GM10248 (cell line): ENCODE measurements at regions of chr5 and their contacts with region 1.

Region 1: GRCh38 chr5:141968914-141969608 is at the start of gene RNF14:
- DNase-seq: peak; percentile 95
- CTCF ChIP-seq: peak; percentile 87

Region 2: DNA sequence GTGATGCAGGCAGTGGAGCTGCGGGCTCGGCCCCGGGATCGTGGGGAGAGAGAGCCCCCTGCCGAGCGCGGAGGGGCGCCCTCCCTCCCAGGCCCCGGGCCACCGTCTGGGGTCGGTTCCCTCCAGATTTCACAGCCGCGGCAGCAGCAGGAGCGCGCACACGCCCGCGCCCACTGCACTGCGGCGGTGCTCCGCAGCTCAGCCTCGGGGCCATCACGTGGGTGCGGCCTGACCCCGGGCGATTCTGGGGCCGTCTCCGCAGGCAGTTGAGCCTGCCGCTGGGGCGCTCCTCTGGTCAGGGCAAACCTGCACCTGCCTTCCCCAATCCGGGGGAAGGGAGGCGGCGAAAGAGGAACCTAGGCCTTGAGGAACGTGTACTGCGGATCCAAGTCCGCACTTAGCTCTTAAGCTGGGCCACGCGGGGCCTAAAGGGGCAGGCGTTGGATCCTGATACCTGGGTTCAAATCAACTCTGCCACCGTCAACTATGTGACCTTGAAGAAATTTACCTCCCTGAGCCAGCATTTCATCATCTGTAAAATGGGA is 54.8 kb before region 1 on chr5:
- CTCF ChIA-PET with region 1: interaction called, 10 read pairs
- POLR2A ChIA-PET with region 1: no interaction called
- DNase-seq: peak; percentile 66
- CTCF ChIP-seq: peak; percentile 29

Region 3: GRCh38 chr5:141940695-141941271 is 28.3 kb before region 1 on chr5:
- CTCF ChIA-PET with region 1: interaction called, 10 read pairs
- POLR2A ChIA-PET with region 1: no interaction called
- DNase-seq: no peak
- CTCF ChIP-seq: no peak

Region 4: GRCh38 chr5:141992349-141992963 is 23.4 kb after region 1 on chr5:
- CTCF ChIA-PET with region 1: interaction called, 26 read pairs
- POLR2A ChIA-PET with region 1: no interaction called
- DNase-seq: peak; percentile 54
- CTCF ChIP-seq: peak; percentile 70

Region 5: DNA sequence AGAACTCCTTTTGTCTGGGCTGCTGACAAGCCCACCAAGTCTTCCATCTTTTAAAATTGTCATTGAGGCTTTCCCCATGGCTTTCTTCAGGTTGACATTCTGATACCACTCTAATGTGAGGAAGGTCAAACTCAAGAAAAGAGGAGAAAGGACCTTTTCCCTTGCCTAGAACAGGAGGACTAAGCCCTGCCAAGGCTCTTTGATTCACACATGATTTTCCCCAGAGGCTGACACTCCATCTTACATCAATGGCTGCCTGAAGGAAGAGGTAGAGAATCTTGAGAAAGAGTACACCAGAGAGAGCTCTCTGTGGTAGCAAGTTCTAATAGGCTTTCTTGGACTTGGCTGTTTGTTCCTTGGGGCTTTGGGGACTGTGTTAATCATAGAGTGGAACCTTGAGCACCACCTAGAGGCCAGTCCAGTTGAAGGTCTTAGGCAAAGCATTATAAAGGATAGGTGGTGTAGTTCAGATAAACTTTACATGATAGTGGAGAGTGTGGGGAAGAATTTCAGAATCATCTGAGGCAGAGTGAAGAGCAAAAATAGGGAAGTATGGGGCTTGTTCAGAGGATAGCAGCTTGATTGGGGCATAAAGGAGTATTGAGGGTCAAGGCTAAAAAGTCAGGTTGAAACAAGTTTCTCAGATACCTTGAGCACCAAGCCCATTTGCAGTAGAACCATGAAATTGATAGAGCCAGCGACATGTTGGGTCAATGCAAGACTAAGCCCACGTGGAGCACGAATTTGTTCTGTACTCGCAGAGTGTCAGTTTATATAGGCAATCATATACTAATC is 176.2 kb after region 1 on chr5:
- CTCF ChIA-PET with region 1: interaction called, 11 read pairs
- POLR2A ChIA-PET with region 1: no interaction called
- DNase-seq: peak; percentile 50
- CTCF ChIP-seq: peak; percentile 79

Region 6: DNA sequence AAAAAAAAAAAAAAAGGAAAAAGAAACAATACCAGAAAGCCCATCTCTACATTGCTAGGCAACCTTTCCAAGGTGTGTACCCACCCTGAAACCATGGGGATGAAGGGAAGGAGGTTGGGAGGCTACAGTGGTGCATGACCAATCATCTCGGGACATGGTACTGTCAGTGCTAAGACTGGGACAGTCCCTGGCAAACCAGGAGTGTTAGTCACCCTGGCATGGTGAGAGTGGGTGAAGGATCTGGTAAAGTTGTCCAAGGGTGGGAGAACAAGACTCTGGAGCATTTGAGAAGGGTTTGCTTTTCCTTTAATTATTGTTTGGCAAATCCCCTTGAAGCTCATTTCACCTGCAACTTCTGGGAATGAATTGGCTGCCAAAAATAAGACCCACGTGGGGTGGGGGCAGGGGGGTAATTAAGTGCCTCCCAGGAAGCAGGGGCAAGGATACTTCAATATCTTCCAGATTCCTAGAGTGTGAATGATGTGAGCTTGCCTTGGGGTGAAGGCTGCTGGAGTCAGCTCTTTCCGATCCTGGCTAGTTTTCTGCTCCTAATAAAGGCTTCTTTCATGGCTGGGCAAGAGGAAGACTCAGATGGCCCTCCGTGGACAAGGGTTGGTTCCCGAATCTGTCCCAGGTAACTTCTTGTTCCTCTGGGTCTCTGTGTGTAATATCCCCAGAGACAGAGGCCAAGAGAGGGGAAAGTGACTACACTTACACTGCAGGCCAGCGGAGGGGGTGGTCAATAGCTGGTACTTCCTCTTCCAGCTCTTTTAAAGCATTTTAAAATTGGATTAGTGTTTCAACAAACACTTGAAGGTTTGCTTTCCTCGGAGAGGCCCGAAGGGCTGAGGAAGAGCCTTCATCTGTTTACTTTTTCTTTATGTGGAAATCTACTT is 417.3 kb after region 1 on chr5:
- CTCF ChIA-PET with region 1: no interaction called
- POLR2A ChIA-PET with region 1: no interaction called
- DNase-seq: no peak
- CTCF ChIP-seq: no peak